ENCODE measurements at regions of chr1 and their contacts with region 1.

Region 1: GRCh38 chr1:206106328-206107167 is 10.6 kb downstream of the AVPR1B start:
- DNase-seq: peak; percentile 81
- H3K4me3 Mint-ChIP-seq: no peak overlapping the region
- H3K27ac Mint-ChIP-seq: no peak overlapping the region
- H3K4me1 Mint-ChIP-seq: peaks cover 3% of the 10 kb centered on the region
- H3K27me3 Mint-ChIP-seq: peaks cover 16% of the 10 kb centered on the region

Region 2: DNA sequence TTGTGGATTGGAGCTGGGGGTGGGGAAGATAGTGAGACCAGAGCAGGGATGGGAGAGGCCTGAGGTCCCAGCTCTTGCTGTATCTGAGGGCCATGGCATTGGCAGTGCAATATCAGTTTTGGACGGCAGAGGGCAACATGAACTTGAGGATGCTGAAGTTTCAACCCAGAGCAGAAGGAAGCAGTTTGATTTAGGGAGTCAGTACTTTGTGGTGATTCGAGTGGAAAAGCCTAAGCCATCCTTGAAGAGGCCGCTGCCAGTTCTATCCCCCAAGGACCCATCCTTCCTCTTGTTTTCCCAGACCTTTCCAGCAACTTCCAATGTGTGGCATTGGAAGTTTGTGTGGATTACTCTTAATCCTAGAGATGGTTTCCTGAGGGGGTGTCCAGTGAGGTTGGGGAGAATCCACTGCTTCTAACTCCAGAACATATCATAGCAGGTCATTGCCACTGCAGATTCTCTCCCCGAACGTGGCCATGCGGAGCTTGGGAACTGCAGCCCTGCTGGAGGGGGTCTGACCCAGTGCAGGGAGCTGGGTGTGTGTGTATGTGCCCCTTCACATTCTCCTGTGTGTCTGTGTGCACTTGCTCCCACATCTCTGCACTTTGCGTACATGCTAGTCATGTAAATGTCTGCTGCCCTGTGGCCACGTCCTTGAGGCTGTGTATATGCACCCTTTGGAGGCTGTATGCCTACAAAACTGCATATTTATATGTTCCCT is 187.4 kb before region 1 on chr1:
- CTCF ChIA-PET with region 1: interaction called, 13 read pairs
- POLR2A ChIA-PET with region 1: no interaction called
- DNase-seq: peak; percentile 75
- H3K4me3 Mint-ChIP-seq: no peak overlapping the region
- H3K27ac Mint-ChIP-seq: no peak overlapping the region
- H3K4me1 Mint-ChIP-seq: no peaks in the 10 kb centered on the region
- H3K27me3 Mint-ChIP-seq: peaks cover 1% of the 10 kb centered on the region

Region 3: DNA sequence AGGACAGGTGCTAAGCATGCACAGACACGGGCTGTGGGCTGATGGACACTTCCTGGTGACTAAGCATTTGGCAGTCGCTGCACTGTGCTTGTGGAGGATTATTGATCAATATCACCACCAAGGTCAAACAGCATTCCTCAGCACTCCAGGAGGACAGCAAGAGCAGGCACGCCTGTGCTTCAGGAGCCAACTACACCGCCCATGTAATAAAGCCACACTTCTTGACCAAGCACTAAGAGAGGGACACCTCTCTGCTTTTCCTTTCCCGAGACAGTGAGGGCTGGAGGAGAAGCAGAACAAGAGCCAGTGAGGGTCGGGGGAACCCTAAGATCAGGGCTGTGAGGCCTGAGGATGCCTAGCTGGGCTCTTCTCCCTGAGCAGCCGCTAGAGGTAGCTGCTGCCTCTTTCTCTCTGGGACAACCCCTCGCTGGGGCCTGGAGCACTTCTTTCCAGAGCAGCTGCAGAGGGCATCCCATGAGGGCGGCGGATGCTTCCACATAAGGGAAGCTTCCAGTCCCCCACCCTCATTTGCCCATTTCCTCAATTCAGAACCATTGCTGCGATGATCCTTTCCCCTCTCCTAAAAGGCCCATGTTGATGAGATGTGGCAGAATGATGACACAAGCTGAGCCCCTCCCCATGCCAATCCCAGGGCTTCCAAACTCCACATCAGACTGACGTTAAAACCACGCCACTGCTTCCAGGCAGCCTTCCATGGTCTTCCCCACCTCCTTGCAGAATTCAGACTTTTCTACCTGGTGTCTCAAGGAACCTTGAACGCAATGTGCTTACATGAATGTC is 122.4 kb before region 1 on chr1:
- CTCF ChIA-PET with region 1: interaction called, 46 read pairs
- POLR2A ChIA-PET with region 1: no interaction called
- DNase-seq: peak; percentile 29
- H3K4me3 Mint-ChIP-seq: no peak overlapping the region
- H3K27ac Mint-ChIP-seq: no peak overlapping the region
- H3K4me1 Mint-ChIP-seq: no peaks in the 10 kb centered on the region
- H3K27me3 Mint-ChIP-seq: peaks cover 7% of the 10 kb centered on the region

Region 4: GRCh38 chr1:206030714-206031113 is 75.8 kb before region 1 on chr1:
- CTCF ChIA-PET with region 1: interaction called, 181 read pairs
- POLR2A ChIA-PET with region 1: interaction called, 5 read pairs
- DNase-seq: peak; percentile 74
- H3K4me3 Mint-ChIP-seq: no peak overlapping the region
- H3K27ac Mint-ChIP-seq: no peak overlapping the region
- H3K4me1 Mint-ChIP-seq: peaks cover 7% of the 10 kb centered on the region
- H3K27me3 Mint-ChIP-seq: peaks cover 36% of the 10 kb centered on the region

Region 5: GRCh38 chr1:206121269-206121668 is 14.7 kb after region 1 on chr1:
- CTCF ChIA-PET with region 1: no interaction called
- POLR2A ChIA-PET with region 1: no interaction called
- DNase-seq: no peak
- H3K4me3 Mint-ChIP-seq: no peak overlapping the region
- H3K27ac Mint-ChIP-seq: no peak overlapping the region
- H3K4me1 Mint-ChIP-seq: peaks cover 8% of the 10 kb centered on the region
- H3K27me3 Mint-ChIP-seq: peaks cover 71% of the 10 kb centered on the region